ENCODE measurements at regions of chr5 and their contacts with region 1.

Region 1: DNA sequence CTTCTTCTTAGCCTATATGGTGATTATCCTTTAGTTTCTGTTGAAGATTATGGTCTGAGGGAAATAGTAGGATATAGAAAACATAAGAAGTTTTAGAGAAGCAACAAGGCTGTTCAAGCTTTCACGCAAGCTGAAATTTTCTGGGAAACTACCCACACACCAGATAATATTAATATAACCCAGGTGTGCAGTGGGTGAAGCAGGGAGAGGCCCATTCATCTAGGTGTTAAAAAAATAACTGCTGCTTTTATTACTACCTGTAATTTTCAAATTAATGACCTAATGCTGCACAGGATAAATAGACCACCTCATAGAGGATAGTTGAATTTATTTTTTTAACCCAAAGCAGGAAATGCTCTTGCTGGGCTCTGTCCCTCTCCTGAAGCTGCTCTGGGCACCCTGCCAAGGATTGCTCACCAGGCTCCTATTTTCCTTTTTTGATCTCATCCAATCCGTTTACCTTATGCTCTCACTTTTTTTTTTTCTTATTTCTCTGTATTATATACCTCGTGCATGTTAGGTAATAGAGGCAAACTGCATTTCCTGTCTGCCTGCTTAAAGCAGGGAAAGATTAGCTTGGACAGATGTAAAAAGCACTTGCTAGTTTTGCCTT is 124.3 kb upstream of the SLC12A2 start:
- DNase-seq: peak; percentile 86
- H3K4me3 ChIP-seq: no peak overlapping the region
- H3K27ac ChIP-seq: peak overlapping the region; percentile 64
- H3K4me1 ChIP-seq: peaks cover 44% of the 10 kb centered on the region
- H3K27me3 ChIP-seq: no peaks in the 10 kb centered on the region
- CTCF ChIP-seq: no peak
- POLR2A ChIP-seq: no peak

Region 2: GRCh38 chr5:127839496-127840197 is 119.6 kb before region 1 on chr5:
- CTCF ChIA-PET with region 1: no interaction called
- POLR2A ChIA-PET with region 1: no interaction called
- dilution Hi-C with region 1: no loop called
- intact Hi-C with region 1: no loop called
- DNase-seq: no peak
- H3K4me3 ChIP-seq: no peak overlapping the region
- H3K27ac ChIP-seq: no peak overlapping the region
- H3K4me1 ChIP-seq: peaks cover 7% of the 10 kb centered on the region
- H3K27me3 ChIP-seq: no peaks in the 10 kb centered on the region
- CTCF ChIP-seq: no peak
- POLR2A ChIP-seq: no peak

Region 3: GRCh38 chr5:127858116-127858784 is 101.0 kb before region 1 on chr5:
- CTCF ChIA-PET with region 1: interaction called, 3 read pairs
- POLR2A ChIA-PET with region 1: no interaction called
- dilution Hi-C with region 1: no loop called
- intact Hi-C with region 1: loop called (anchors 1 kb)
- DNase-seq: peak; percentile 89
- H3K4me3 ChIP-seq: no peak overlapping the region
- H3K27ac ChIP-seq: peak overlapping the region; percentile 84
- H3K4me1 ChIP-seq: peaks cover 27% of the 10 kb centered on the region
- H3K27me3 ChIP-seq: no peaks in the 10 kb centered on the region
- CTCF ChIP-seq: no peak
- POLR2A ChIP-seq: no peak

Region 4: GRCh38 chr5:127909078-127909477 is 50.2 kb before region 1 on chr5:
- CTCF ChIA-PET with region 1: interaction called, 12 read pairs
- POLR2A ChIA-PET with region 1: no interaction called
- dilution Hi-C with region 1: no loop called
- intact Hi-C with region 1: loop called (anchors 2 kb)
- DNase-seq: peak; percentile 68
- H3K4me3 ChIP-seq: no peak overlapping the region
- H3K27ac ChIP-seq: no peak overlapping the region
- H3K4me1 ChIP-seq: peaks cover 15% of the 10 kb centered on the region
- H3K27me3 ChIP-seq: no peaks in the 10 kb centered on the region
- CTCF ChIP-seq: peak; percentile 56 to 62
- POLR2A ChIP-seq: no peak

Region 5: DNA sequence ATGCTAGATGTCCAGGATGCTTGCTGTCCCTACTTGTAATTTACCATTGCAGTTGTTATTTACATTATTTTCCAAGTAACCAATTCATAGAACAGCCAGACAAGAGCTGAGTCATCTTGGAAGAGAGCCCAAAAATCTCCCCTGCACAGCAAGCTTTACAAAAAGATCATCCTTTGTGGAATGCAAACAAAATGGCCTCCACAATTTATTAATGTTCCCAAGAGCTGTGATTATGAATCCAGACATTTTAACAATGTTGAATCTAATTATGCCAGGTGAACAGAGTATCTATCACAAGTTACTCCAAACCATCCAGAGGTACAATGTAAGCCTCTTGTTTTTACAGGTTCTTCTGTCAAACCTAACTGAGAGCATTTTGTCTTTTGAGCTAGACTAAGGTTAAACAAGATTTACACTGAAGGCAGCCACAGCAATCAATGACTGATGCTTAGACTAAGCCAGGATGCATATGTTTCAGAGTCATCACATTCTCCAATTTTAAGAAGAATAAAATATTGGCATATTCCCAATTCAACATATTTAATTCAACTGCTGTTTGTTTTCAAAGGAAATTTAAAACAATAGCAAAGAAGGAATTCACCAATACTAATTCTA is 29.0 kb after region 1 on chr5:
- CTCF ChIA-PET with region 1: interaction called, 5 read pairs
- POLR2A ChIA-PET with region 1: interaction called, 4 read pairs
- dilution Hi-C with region 1: no loop called
- intact Hi-C with region 1: loop called (anchors 1 kb)
- DNase-seq: peak; percentile 92
- H3K4me3 ChIP-seq: no peak overlapping the region
- H3K27ac ChIP-seq: peak overlapping the region; percentile 65
- H3K4me1 ChIP-seq: peaks cover 13% of the 10 kb centered on the region
- H3K27me3 ChIP-seq: no peaks in the 10 kb centered on the region
- CTCF ChIP-seq: no peak
- POLR2A ChIP-seq: no peak

Region 6: GRCh38 chr5:128083033-128083810 is 124.0 kb after region 1 on chr5 and contains the start of gene SLC12A2:
- CTCF ChIA-PET with region 1: interaction called, 6 read pairs
- POLR2A ChIA-PET with region 1: interaction called, 6 read pairs
- dilution Hi-C with region 1: no loop called
- intact Hi-C with region 1: loop called (anchors 1 kb)
- DNase-seq: peak; percentile 93
- H3K4me3 ChIP-seq: peak within 1 kb of the TSS; percentile 32 to 94 (median 85)
- H3K27ac ChIP-seq: peak within 1 kb of the TSS; percentile 76
- H3K4me1 ChIP-seq: peaks cover 25% of the 10 kb centered on the region
- H3K27me3 ChIP-seq: no peaks in the 10 kb centered on the region
- CTCF ChIP-seq: no peak
- POLR2A ChIP-seq: peak; percentile 89
- total RNA-seq, gene SLC12A2: 41.7 and 59.5 TPM in 2 replicates